ENCODE measurements at regions of chr1 and their contacts with region 1.

Region 1: DNA sequence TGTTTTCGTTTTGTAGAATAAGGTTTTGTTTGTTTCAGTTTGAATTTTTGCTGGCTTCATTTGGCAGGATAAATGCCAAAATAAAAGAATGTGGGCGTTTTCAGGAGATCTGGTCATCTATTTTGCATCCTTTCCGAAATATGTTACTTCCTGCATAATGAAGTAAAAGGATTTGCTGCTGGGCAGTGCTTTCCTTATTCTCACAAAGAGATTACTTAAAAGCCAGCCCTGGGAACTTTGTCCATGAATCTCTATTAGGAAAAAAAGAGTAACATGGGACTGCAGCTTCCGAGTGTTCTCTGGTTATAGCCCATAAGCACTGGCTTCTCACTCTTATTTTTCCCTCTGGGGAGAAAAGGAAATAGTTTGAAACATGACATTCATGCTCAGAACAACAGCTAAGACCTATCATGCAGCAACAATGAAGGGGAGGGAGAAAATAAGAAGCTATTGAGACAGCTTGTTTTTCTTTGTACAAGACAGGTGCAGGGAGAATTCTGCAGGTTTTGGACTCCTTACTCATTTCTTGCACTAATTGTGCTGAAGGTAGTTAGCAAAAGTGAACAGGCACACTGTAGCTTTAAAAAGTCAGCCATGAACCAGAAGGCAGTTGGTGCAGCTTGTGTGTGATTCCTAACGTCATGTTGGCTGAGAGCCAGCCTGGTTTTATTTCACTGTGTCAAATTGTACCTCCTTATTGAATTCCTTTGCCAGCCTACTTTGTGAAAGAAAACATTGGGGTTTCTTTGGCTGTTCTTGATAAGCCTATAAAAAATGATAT is at the start of gene SAMD13:
- DNase-seq: peak; percentile 67
- H3K4me3 Mint-ChIP-seq: peak within 1 kb of the TSS; percentile 62
- H3K27ac Mint-ChIP-seq: peak within 1 kb of the TSS; percentile 79
- H3K4me1 Mint-ChIP-seq: peaks cover 46% of the 10 kb centered on the region
- H3K27me3 Mint-ChIP-seq: no peaks in the 10 kb centered on the region
- CTCF ChIP-seq: no peak
- total RNA-seq, gene SAMD13: 1.7 and 1.8 TPM in 2 replicates

Region 2: GRCh38 chr1:84174051-84174556 is 127.1 kb before region 1 on chr1:
- CTCF ChIA-PET with region 1: interaction called, 7 read pairs
- intact Hi-C with region 1: loop called (anchors 10 kb)
- DNase-seq: peak; percentile 29
- H3K4me3 Mint-ChIP-seq: peak overlapping the region; percentile 58
- H3K27ac Mint-ChIP-seq: peak overlapping the region; percentile 88
- H3K4me1 Mint-ChIP-seq: peaks cover 23% of the 10 kb centered on the region
- H3K27me3 Mint-ChIP-seq: no peaks in the 10 kb centered on the region
- CTCF ChIP-seq: no peak

Region 3: DNA sequence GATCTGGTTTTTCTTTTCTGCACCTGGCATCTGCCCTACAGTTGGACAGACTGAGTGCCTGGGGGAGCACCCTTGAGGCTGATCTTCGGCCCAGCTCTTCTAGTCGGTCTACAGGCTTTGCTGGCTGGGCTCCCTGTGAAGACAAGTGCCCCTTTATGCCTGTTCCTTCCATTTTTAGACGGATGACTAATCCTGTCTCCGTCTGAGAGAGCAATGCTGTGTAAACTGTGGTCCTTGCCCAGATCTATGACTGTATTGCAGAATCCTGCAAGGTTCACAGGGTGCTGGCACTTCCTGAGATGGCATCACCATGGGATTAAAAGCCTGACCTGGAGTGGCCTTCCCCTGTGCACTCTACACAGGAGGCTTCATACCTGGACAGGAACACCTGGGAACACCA is 47.3 kb before region 1 on chr1:
- CTCF ChIA-PET with region 1: no interaction called
- intact Hi-C with region 1: loop called (anchors 2 kb)
- DNase-seq: peak; percentile 84
- H3K4me3 Mint-ChIP-seq: no peak overlapping the region
- H3K27ac Mint-ChIP-seq: peak overlapping the region; percentile 70
- H3K4me1 Mint-ChIP-seq: peaks cover 60% of the 10 kb centered on the region
- H3K27me3 Mint-ChIP-seq: no peaks in the 10 kb centered on the region
- CTCF ChIP-seq: no peak

Region 4: GRCh38 chr1:84271441-84272151 is 29.6 kb before region 1 on chr1:
- CTCF ChIA-PET with region 1: no interaction called
- intact Hi-C with region 1: no loop called
- DNase-seq: peak; percentile 18
- H3K4me3 Mint-ChIP-seq: peak overlapping the region; percentile 27
- H3K27ac Mint-ChIP-seq: peak overlapping the region; percentile 87
- H3K4me1 Mint-ChIP-seq: peaks cover 60% of the 10 kb centered on the region
- H3K27me3 Mint-ChIP-seq: no peaks in the 10 kb centered on the region
- CTCF ChIP-seq: no peak

Region 5: GRCh38 chr1:84365225-84366221 is 64.3 kb after region 1 on chr1:
- CTCF ChIA-PET with region 1: interaction called, 3 read pairs
- intact Hi-C with region 1: loop called (anchors 5 kb)
- DNase-seq: peak; percentile 76
- H3K4me3 Mint-ChIP-seq: no peak overlapping the region
- H3K27ac Mint-ChIP-seq: peak overlapping the region; percentile 89
- H3K4me1 Mint-ChIP-seq: peaks cover 31% of the 10 kb centered on the region
- H3K27me3 Mint-ChIP-seq: no peaks in the 10 kb centered on the region
- CTCF ChIP-seq: no peak

Measured in Calu3 (cell line).